Colonic mucosa (tissue), 4 donors: ENCODE measurements at regions of chr2 and their contacts with region 1.

Region 1: GRCh38 chr2:158045362-158045761 is 56.3 kb upstream of the UPP2 start:
- DNase-seq: peak; percentile 41
- H3K4me3 ChIP-seq: no peak overlapping the region
- H3K27ac ChIP-seq: no peak overlapping the region
- H3K4me1 ChIP-seq: no peaks in the 10 kb centered on the region
- H3K27me3 ChIP-seq: no peaks in the 10 kb centered on the region
- CTCF ChIP-seq: peak; percentile 46

Region 2: DNA sequence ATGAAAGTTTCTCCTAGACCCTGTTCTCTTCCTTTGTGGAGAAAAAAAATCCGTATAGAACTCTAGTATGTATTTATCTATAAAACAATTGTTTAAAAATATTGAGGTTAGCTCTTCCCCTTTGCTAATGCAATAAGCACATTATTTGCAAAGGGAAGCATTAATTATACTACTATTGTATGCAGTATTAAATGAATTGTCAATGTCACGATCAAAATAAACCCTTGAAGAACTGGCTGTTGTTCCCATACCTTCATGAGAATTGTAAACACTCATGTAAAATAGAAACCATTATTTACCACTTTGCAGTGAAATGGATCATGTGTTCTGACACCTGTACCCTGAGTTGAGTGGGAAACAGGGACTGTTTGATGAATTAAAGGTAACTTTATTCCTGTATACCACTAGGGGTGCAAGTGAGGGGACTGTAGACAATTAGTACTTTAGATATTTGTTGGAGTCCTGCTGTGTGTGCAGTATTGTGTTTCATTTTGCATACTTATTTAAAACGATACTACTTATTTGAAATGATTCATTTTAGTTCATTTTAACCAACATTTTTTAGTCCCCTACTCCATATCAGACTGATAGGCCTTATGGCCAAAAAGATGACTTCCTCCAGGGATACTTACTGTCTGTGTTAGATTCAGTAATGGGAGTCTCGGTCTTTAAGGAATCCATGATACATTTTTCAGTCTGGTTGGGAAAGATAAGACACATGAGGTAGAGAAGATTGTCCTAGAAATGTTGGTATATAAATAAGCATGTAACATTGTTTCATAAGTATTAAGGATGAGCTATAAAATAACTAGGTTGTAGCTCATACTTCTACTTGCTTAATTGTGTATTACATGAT is 419.3 kb after region 1 on chr2:
- intact Hi-C with region 1: loop called (anchors 10 kb)
- DNase-seq: no peak
- H3K4me3 ChIP-seq: no peak overlapping the region
- H3K27ac ChIP-seq: no peak overlapping the region
- H3K4me1 ChIP-seq: no peaks in the 10 kb centered on the region
- H3K27me3 ChIP-seq: no peaks in the 10 kb centered on the region
- CTCF ChIP-seq: peak; percentile 32